ENCODE measurements at regions of chr3 and their contacts with region 1.

Region 1: DNA sequence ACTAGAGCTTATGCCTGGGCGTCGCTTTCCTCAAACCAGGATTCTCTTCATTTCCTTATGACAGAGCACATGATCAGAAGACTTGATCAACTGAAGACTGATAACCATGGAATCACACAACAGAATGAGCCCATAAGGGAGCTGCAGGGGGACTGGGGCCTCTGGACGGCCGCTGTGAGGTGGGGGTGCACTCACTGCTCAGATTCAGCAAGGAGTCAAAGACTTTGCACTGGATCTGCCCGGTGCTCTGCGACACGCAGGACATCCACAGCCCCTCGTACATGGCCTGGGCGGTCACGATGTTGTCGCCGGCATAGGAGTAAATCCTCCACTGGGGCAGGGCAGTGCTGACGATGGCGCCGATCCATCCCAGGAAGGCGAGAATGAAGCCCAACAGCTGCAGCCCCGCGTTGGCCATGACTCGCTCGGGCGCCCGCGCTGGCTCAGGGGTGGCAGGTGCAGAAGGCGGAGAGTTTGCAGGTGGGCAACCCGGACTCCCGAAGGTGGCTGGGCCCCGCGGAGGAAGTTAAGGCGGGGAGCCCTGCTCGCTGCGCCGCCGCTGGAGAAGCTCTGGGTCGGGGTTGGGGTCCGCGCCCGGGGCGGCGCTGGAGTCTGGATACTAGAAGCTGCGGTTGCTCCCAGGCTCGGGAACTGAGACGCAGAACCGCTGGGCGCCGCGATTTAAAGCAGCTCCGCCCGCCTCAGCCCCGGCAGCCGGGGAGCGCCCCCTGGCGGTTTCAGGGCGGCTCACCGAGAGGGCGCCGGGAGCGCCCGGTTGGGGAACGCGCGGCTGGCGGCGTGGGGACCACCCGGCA is at the start of gene CLDN1:
- DNase-seq: peak; percentile 85 to 94
- H3K4me3 ChIP-seq: peak within 1 kb of the TSS; percentile 43 to 65 (median 54)
- H3K27ac ChIP-seq: peak within 1 kb of the TSS in 3 of 5 donors; percentile 36 to 45 (median 36)
- H3K4me1 ChIP-seq: peaks cover 4 to 22% (median 17%) of the 10 kb centered on the region in 4 donors
- H3K27me3 ChIP-seq: peaks cover 0 to 26% (median 7%) of the 10 kb centered on the region in 3 donors
- CTCF ChIP-seq: peak in 5 of 7 experiments; percentile 65 to 98 (median 83)
- EP300 ChIP-seq: no peak
- POLR2A ChIP-seq: no peak
- total RNA-seq, gene CLDN1: 4.9 to 7.0 TPM in 2 of 5 donors, not detected in the others

Region 2: GRCh38 chr3:189975391-189975990 is 346.5 kb before region 1 on chr3:
- intact Hi-C with region 1: loop called (anchors 10 kb)
- DNase-seq: peak in 1 of 2 donors; percentile 45
- H3K4me3 ChIP-seq: no peak overlapping the region
- H3K27ac ChIP-seq: no peak overlapping the region
- H3K4me1 ChIP-seq: no peaks in the 10 kb centered on the region
- H3K27me3 ChIP-seq: no peaks in the 10 kb centered on the region
- CTCF ChIP-seq: no peak
- EP300 ChIP-seq: no peak
- POLR2A ChIP-seq: no peak

Region 3: DNA sequence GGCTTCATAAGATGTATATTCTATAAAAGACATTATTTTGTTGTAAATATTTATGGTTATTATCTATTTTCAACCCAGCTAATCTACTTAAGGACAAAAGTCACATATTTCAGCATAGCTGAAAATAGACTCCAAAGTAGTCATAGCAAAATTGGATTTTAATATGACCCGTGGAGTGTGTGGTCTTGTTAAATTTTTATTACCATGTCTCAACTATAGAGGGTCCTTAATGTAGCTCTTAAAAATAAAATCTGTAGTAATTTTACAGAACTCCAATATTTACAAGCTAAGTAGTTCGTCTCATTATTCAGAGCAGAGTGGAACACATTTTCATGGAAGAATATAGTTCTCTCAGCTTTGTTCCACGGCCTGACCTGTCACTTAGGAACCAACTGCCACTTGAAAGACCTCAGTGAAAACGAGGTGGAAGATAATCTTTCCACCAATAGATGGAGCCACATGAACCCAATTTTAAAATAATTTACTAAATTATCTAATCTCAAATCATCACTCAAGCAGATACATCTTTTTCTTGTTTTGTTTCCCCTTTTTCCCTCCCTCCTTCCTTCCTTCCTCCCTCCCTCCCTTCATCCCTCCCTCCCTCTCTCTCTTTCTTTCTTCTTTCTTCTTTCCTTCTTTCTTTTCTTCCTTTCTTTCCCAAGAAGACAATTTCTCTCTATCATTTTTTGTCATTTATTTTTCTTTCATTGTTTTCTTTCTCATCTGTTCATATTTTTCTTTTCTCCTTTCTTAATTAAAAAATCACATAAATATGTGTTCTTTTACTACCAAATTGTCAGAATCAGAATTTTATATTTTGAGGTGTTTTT is 96.9 kb before region 1 on chr3:
- intact Hi-C with region 1: loop called (anchors 10 kb)
- DNase-seq: peak in 1 of 2 donors; percentile 54
- H3K4me3 ChIP-seq: no peak overlapping the region
- H3K27ac ChIP-seq: no peak overlapping the region
- H3K4me1 ChIP-seq: no peaks in the 10 kb centered on the region
- H3K27me3 ChIP-seq: no peaks in the 10 kb centered on the region
- CTCF ChIP-seq: peak in 2 of 7 experiments; percentile 12 to 35
- EP300 ChIP-seq: no peak
- POLR2A ChIP-seq: no peak

Region 4: DNA sequence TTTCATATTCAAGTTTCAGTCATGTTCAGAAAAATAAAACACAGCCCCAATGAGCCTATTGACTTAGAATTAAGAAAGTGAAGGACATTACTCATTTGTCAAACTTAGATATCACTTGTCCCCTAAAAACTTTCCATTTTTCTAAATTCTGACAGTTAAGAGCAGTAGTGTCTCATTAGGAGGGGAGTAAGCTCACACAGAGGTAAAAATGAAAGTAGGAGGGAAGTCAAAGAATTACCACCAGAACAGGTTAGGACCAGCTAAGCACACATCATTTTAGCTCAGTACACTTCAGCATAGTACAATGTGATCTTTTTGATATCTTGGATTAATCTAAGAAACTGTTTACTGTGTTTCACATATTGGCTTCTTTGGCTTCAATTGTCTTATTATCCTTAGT is 941.4 kb after region 1 on chr3:
- intact Hi-C with region 1: no loop called
- DNase-seq: no peak
- H3K4me3 ChIP-seq: no peak overlapping the region
- H3K27ac ChIP-seq: no peak overlapping the region
- H3K4me1 ChIP-seq: peaks cover 0 to 4% (median 0%) of the 10 kb centered on the region in 4 donors
- H3K27me3 ChIP-seq: no peaks in the 10 kb centered on the region
- CTCF ChIP-seq: no peak
- EP300 ChIP-seq: no peak
- POLR2A ChIP-seq: no peak

Measured in stomach (tissue), 19 donors.